ENCODE measurements at regions of chr2 and their contacts with region 1.

Region 1: GRCh38 chr2:231648587-231649174 is 56.0 kb downstream of the TEX44 start:
- DNase-seq: peak; percentile 93
- H3K4me3 Mint-ChIP-seq: no peak overlapping the region
- H3K27ac Mint-ChIP-seq: no peak overlapping the region
- H3K4me1 Mint-ChIP-seq: peaks cover 16% of the 10 kb centered on the region
- H3K27me3 Mint-ChIP-seq: no peaks in the 10 kb centered on the region
- CTCF ChIP-seq: peak; percentile 80

Region 2: GRCh38 chr2:232573042-232573441 is 924.4 kb after region 1 on chr2:
- CTCF ChIA-PET with region 1: interaction called, 12 read pairs
- intact Hi-C with region 1: no loop called
- DNase-seq: no peak
- H3K4me3 Mint-ChIP-seq: peak overlapping the region; percentile 33
- H3K27ac Mint-ChIP-seq: peak overlapping the region; percentile 38
- H3K4me1 Mint-ChIP-seq: peaks cover 63% of the 10 kb centered on the region
- H3K27me3 Mint-ChIP-seq: no peaks in the 10 kb centered on the region
- CTCF ChIP-seq: no peak